ENCODE measurements at regions of chr2 and their contacts with region 1.

Region 1: DNA sequence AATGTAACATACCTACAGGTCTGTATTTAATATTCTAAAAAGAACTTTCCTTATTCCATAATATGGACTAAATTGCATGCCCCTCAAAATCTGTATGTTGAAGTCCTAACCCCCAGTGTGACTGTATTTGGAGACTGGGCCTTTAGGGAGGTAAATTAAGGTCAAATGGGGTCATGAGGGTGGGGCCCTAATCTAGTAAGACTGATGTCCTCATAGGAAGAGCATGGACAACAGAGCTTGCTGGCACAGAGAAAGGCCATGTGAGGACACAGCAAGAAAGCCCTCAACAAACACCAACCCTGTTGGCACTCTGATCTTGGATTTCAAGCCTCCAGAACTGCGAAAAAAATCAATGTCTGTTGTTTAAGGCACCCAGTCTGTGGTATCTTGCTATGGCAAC is 18.6 kb downstream of the SF3B1 start:
- DNase-seq: no peak
- H3K4me3 ChIP-seq: no peak overlapping the region
- H3K27ac ChIP-seq: no peak overlapping the region
- H3K4me1 ChIP-seq: no peaks in the 10 kb centered on the region
- H3K27me3 ChIP-seq: no peaks in the 10 kb centered on the region
- CTCF ChIP-seq: no peak

Region 2: GRCh38 chr2:197369228-197369932 is 46.9 kb before region 1 on chr2:
- intact Hi-C with region 1: no loop called
- DNase-seq: no peak
- H3K4me3 ChIP-seq: no peak overlapping the region
- H3K27ac ChIP-seq: no peak overlapping the region
- H3K4me1 ChIP-seq: no peaks in the 10 kb centered on the region
- H3K27me3 ChIP-seq: no peaks in the 10 kb centered on the region
- CTCF ChIP-seq: no peak

Region 3: GRCh38 chr2:197477797-197478196 is 61.5 kb after region 1 on chr2:
- intact Hi-C with region 1: loop called (anchors 10 kb)
- DNase-seq: no peak
- H3K4me3 ChIP-seq: no peak overlapping the region
- H3K27ac ChIP-seq: no peak overlapping the region
- H3K4me1 ChIP-seq: no peaks in the 10 kb centered on the region
- H3K27me3 ChIP-seq: no peaks in the 10 kb centered on the region
- CTCF ChIP-seq: no peak

Measured in tibial artery (tissue), 4 donors.